Mammary epithelial cell (primary cell): ENCODE measurements at regions of chr12 and their contacts with region 1.

Region 1: DNA sequence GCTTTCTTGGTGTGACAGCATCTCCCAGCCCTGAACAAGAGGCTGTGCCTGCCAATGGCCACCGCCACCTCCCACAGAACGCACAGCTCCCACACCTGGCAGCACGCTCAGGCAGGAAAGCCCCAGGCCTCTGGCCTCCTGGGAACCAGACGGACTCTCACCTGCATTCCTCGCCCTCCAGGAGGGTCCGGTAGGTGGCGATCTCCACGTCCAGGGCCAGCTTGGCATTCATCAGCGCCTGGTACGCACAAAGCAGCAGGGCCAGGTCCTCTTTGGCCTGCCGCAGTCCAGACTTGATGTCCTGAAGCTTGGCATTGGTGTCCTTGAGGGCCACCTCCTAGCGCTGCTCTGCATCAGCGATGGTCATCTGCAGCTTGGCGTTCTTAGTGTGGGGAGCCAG is 12.1 kb upstream of the KRT77 start:
- DNase-seq: peak; percentile 4
- H3K4me3 ChIP-seq: no peak overlapping the region
- H3K27ac ChIP-seq: no peak overlapping the region
- H3K4me1 ChIP-seq: no peaks in the 10 kb centered on the region
- H3K27me3 ChIP-seq: peaks cover 21% of the 10 kb centered on the region
- CTCF ChIP-seq: no peak

Region 2: GRCh38 chr12:52783563-52784316 is 68.3 kb after region 1 on chr12:
- CTCF ChIA-PET with region 1: no interaction called
- dilution Hi-C with region 1: loop called (anchors 5 kb)
- in situ Hi-C with region 1: no loop called
- intact Hi-C with region 1: no loop called
- DNase-seq: no peak
- H3K4me3 ChIP-seq: no peak overlapping the region
- H3K27ac ChIP-seq: no peak overlapping the region
- H3K4me1 ChIP-seq: no peaks in the 10 kb centered on the region
- H3K27me3 ChIP-seq: peaks cover 23% of the 10 kb centered on the region
- CTCF ChIP-seq: no peak

Region 3: DNA sequence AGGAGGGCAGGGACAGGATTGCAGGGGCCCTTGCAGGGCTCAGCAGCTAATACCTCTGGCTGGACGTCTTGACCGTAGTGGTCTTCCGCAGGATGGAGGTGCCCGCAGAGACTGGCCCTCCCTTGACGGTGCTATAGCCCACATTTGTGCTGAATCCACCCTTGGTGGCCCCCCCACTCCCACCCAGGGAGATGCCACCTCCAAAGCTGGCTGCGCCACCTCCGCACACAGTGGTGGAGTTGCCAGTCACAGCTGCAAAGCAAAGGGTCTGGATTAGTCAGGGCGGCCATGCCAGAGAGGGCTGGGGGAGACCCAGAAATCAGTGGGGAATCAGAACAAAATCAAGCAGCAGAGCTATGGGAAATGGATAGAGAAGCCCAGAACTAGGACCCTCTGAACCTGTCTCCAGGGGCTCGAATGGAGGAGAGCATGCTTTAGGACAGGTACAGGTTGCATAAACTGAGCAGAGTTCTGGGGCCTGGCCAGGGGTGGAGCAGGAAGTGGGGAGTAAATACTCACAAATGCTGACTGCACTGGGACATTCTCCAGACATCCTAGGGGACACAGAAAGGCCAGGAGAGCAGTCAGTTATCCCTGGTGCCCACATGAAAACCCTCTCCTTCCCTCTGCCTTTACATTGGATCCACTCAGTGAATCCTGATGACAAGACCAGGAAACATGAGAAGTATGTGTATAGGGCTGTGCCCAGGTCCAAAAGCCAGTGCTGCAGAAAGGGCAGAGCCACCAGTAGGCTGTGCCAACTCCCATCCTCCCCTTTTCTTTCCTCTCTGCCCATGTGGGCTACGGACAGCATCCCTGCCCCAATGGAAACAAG is 106.6 kb after region 1 on chr12:
- CTCF ChIA-PET with region 1: no interaction called
- dilution Hi-C with region 1: loop called (anchors 5 kb)
- in situ Hi-C with region 1: no loop called
- intact Hi-C with region 1: no loop called
- DNase-seq: no peak
- H3K4me3 ChIP-seq: no peak overlapping the region
- H3K27ac ChIP-seq: no peak overlapping the region
- H3K4me1 ChIP-seq: no peaks in the 10 kb centered on the region
- H3K27me3 ChIP-seq: peaks cover 10% of the 10 kb centered on the region
- CTCF ChIP-seq: no peak